ENCODE measurements at regions of chr17 and their contacts with region 1.

Region 1: DNA sequence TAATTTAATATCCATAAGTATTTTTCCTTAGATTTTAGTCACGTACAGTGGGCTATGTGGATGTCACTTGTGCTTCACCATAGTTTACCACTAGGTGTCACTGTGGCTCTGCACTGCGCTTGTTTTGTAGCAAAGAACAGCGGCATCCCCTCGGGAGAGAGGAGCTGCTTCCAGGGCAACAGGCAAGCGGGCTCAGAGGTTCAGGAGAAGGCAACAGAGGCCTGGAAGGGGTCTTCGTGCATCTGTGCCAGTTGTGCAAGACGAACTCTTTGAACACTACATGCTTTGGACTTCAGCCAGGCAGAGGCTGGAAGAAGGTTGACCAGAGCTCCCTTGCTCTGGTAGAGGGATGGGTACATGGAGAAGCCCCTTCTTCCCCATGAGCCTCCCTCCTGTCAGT is 20.6 kb downstream of the CYB561 start:
- DNase-seq: peak; percentile 83 to 86
- ATAC-seq: peak; percentile 63 to 93
- H3K4me3 ChIP-seq: no peak overlapping the region
- H3K27ac ChIP-seq: no peak overlapping the region
- H3K4me1 ChIP-seq: no peaks in the 10 kb centered on the region
- CTCF ChIP-seq: peak; percentile 99
- EP300 ChIP-seq: no peak
- POLR2A ChIP-seq: no peak
- RAD21 ChIP-seq: peak; percentile 97 to 99

Region 2: GRCh38 chr17:63356337-63356757 is 69.1 kb before region 1 on chr17:
- CTCF ChIA-PET with region 1: no interaction called
- POLR2A ChIA-PET with region 1: no interaction called
- DNase-seq: no peak
- ATAC-seq: peak in 1 of 2 experiments; percentile 44; a peak in 2 of 6 replicates
- H3K4me3 ChIP-seq: no peak overlapping the region
- H3K27ac ChIP-seq: no peak overlapping the region
- H3K4me1 ChIP-seq: no peaks in the 10 kb centered on the region
- CTCF ChIP-seq: no peak
- EP300 ChIP-seq: no peak
- POLR2A ChIP-seq: no peak
- RAD21 ChIP-seq: no peak

Region 3: GRCh38 chr17:63406689-63407330 is 18.7 kb before region 1 on chr17:
- CTCF ChIA-PET with region 1: interaction called, 90 read pairs
- POLR2A ChIA-PET with region 1: no interaction called
- DNase-seq: peak; percentile 87 to 92
- ATAC-seq: peak; percentile 95 to 97
- H3K4me3 ChIP-seq: no peak overlapping the region
- H3K27ac ChIP-seq: no peak overlapping the region
- H3K4me1 ChIP-seq: no peaks in the 10 kb centered on the region
- CTCF ChIP-seq: peak; percentile 96
- EP300 ChIP-seq: no peak
- POLR2A ChIP-seq: no peak
- RAD21 ChIP-seq: peak; percentile 94 to 96

Region 4: DNA sequence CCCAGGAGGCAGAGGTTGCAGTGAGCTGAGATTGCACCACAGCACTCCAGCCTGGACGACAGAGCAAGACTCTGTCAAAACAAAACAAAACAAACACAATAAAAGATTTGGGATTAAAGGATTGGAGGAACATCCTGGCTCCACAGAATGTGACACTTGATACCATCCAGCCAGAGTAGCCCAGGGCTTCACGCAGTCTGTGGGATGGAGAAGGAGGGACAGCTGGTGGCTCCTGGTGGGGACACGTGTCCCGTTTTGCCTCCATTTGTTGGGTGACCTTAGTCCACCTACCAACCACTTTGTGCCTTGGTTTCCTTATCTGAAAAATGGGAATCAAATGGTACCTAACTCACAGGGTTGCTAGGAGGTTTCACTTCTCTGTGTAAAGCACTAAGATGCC is 33.0 kb after region 1 on chr17:
- CTCF ChIA-PET with region 1: interaction called, 364 read pairs
- POLR2A ChIA-PET with region 1: no interaction called
- DNase-seq: no peak
- ATAC-seq: 0 out of 6 replicates have a peak, but pooled peaks of 1 of the 2 experiments have one; percentile 8
- H3K4me3 ChIP-seq: no peak overlapping the region
- H3K27ac ChIP-seq: no peak overlapping the region
- H3K4me1 ChIP-seq: peaks cover 25% of the 10 kb centered on the region
- CTCF ChIP-seq: no peak
- EP300 ChIP-seq: no peak
- POLR2A ChIP-seq: no peak
- RAD21 ChIP-seq: no peak

Region 5: DNA sequence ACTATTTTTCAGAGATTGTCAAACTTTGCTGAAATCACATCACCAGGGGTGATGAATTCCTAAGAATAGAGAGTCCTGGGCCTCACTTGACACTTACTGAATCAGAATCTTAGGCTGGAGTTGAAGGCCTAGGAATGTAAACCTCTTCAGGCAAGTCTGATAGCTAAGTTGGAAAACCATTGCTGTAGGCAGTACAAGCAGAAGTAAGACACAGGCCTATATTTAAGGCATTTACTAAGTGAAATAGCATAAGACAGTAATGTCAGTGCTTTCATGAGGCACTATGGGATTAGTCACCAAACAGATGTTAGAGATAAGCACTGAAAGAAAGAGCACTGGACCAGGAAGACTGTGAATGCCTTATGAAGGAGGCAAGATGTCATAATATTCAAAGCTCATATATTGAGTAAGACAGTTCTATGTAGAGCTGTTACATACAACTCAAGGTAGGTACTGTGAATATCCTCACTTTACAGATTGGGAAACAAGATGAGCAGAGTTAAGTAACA is 146.3 kb after region 1 on chr17:
- CTCF ChIA-PET with region 1: interaction called, 22 read pairs
- POLR2A ChIA-PET with region 1: no interaction called
- DNase-seq: peak in 1 of 2 experiments; percentile 21
- ATAC-seq: peak; percentile 27 to 51; a peak in 2 of 6 replicates
- H3K4me3 ChIP-seq: no peak overlapping the region
- H3K27ac ChIP-seq: no peak overlapping the region
- H3K4me1 ChIP-seq: peaks cover 8% of the 10 kb centered on the region; the same call in 1 of the 3 replicates
- CTCF ChIP-seq: no peak
- EP300 ChIP-seq: no peak
- POLR2A ChIP-seq: no peak
- RAD21 ChIP-seq: no peak

Region 6: DNA sequence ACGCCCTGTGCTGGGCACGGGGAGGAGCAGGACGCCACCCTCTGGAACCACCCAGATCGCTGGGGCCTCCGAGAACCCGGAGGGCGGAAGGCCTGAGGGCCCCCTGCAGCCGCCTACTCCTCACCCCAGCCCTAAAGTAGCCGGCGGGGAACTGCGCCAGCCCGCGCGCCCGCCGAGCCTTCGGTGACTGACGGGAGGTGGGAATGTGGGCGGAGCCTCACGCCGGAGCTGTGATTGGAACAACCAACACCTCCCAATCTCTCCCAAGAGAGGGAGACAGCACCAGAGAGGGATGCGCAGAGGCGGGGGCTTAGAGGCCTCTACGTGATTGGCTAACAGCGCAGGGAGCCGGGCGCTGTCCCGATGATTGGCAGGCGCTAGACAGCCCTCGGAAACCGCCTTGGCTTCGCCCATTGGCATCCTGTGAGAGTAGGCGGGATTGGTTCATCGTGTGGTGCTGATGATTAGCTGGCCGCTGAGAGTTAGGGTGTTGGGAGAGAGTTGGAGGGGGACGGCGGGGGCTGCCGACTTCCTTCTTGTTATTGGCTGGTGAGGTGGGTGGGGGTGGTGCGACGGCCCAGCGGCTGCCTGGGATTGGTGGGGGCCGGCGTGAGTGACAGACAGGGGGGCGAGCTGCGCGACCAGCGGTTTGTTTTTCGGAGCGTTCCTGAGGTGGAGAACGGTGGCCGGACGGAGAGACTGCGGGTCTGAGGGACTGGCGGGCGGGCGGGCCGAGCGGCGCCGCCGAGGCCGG is 196.5 kb after region 1 on chr17 and contains the start of gene MAP3K3:
- CTCF ChIA-PET with region 1: interaction called, 336 read pairs
- POLR2A ChIA-PET with region 1: no interaction called
- DNase-seq: peak; percentile 100
- ATAC-seq: peak; percentile 88 to 96
- H3K4me3 ChIP-seq: peak within 1 kb of the TSS; percentile 92
- H3K27ac ChIP-seq: peak within 1 kb of the TSS; percentile 82 to 95
- H3K4me1 ChIP-seq: peaks cover 13% of the 10 kb centered on the region
- CTCF ChIP-seq: no peak
- EP300 ChIP-seq: no peak
- POLR2A ChIP-seq: peak; percentile 90
- RAD21 ChIP-seq: no peak
- polyA plus RNA-seq, gene MAP3K3: 10.8 and 12.6 TPM in 2 replicates

Region 7: GRCh38 chr17:63780522-63780921 is 355.0 kb after region 1 on chr17:
- CTCF ChIA-PET with region 1: no interaction called
- POLR2A ChIA-PET with region 1: no interaction called
- DNase-seq: peak in 1 of 2 experiments; percentile 13
- ATAC-seq: peak; percentile 43 to 51; a peak in 4 of 6 replicates
- H3K4me3 ChIP-seq: no peak overlapping the region
- H3K27ac ChIP-seq: peak overlapping the region in 1 of 2 experiments; percentile 25; a peak in 1 of 6 replicates
- H3K4me1 ChIP-seq: peaks cover 61% of the 10 kb centered on the region
- CTCF ChIP-seq: no peak
- EP300 ChIP-seq: no peak
- POLR2A ChIP-seq: no peak
- RAD21 ChIP-seq: no peak